Caco-2 (cell line): ENCODE measurements at regions of chr3 and their contacts with region 1.

Region 1: GRCh38 chr3:115814778-115815380 is 191.6 kb downstream of the GAP43 start:
- DNase-seq: peak; percentile 63 to 74
- H3K4me3 ChIP-seq: no peak overlapping the region
- H3K4me3 Mint-ChIP-seq: no peak overlapping the region
- H3K27ac Mint-ChIP-seq: no peak overlapping the region
- H3K4me1 ChIP-seq: no peaks in the 10 kb centered on the region
- H3K4me1 Mint-ChIP-seq: no peaks in the 10 kb centered on the region
- H3K27me3 ChIP-seq: no peaks in the 10 kb centered on the region
- H3K27me3 Mint-ChIP-seq: peaks cover 7% of the 10 kb centered on the region
- CTCF ChIP-seq: peak; percentile 82 to 83

Region 2: DNA sequence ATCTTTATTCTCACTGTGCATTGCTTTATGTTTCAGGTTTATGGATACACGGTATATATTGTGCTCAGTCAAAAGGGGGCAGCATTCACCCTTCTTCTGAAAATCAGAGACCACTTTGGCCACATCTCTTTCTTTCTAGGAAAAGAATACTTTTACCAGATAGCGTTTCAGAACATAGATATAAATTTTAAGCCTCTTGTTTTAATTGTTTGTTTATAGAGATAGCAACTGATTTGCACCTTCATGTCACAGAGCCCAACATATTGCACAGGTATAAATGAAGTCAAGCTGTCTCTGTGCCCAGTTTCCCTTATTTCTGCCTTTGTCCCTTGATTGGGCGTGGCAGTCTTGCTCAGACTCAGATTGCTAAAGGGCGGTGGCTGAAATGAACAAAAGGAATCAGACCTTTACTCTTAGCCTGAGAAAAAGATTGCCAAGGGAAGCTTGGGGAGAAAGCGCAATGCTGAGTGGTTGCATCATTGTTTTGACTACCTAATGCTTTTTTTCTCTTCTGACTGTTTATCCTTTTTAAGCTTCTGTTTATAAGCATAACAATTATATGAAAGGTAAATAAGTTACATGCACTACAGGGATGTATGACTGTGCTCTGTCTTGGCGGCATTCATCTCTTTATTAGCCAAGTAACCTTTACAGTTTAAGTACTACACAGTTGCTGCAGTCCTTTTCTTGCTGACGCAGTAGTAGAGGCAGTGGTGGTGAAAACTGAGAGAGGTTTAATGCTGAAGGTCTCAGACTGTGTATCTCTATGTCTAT is 597.0 kb before region 1 on chr3:
- CTCF ChIA-PET with region 1: no interaction called
- POLR2A ChIA-PET with region 1: no interaction called
- intact Hi-C with region 1: loop called (anchors 1 kb)
- DNase-seq: peak in 1 of 2 experiments; percentile 38
- H3K4me3 ChIP-seq: no peak overlapping the region
- H3K4me3 Mint-ChIP-seq: no peak overlapping the region
- H3K27ac Mint-ChIP-seq: no peak overlapping the region
- H3K4me1 ChIP-seq: no peaks in the 10 kb centered on the region
- H3K4me1 Mint-ChIP-seq: no peaks in the 10 kb centered on the region
- H3K27me3 ChIP-seq: no peaks in the 10 kb centered on the region
- H3K27me3 Mint-ChIP-seq: peaks cover 10% of the 10 kb centered on the region
- CTCF ChIP-seq: peak in 1 of 2 experiments; percentile 44